ENCODE measurements at regions of chr7 and their contacts with region 1.

Region 1: GRCh38 chr7:111098011-111098925 is 7.3 kb downstream of the LRRN3 start:
- DNase-seq: peak; percentile 90
- H3K4me3 Mint-ChIP-seq: peak overlapping the region; percentile 79
- H3K27ac Mint-ChIP-seq: peak overlapping the region; percentile 62
- H3K4me1 Mint-ChIP-seq: peaks cover 58% of the 10 kb centered on the region
- H3K27me3 Mint-ChIP-seq: no peaks in the 10 kb centered on the region

Region 2: GRCh38 chr7:110595690-110596325 is 502.5 kb before region 1 on chr7:
- intact Hi-C with region 1: loop called (anchors 1 kb)
- DNase-seq: peak; percentile 62
- H3K4me3 Mint-ChIP-seq: no peak overlapping the region
- H3K27ac Mint-ChIP-seq: no peak overlapping the region
- H3K4me1 Mint-ChIP-seq: peaks cover 9% of the 10 kb centered on the region
- H3K27me3 Mint-ChIP-seq: peaks cover 3% of the 10 kb centered on the region

Region 3: GRCh38 chr7:111083413-111083812 is 14.9 kb before region 1 on chr7:
- intact Hi-C with region 1: loop called (anchors 2 kb)
- DNase-seq: peak; percentile 93
- H3K4me3 Mint-ChIP-seq: peak overlapping the region; percentile 58
- H3K27ac Mint-ChIP-seq: peak overlapping the region; percentile 86
- H3K4me1 Mint-ChIP-seq: peaks cover 70% of the 10 kb centered on the region
- H3K27me3 Mint-ChIP-seq: peaks cover 2% of the 10 kb centered on the region

Region 4: DNA sequence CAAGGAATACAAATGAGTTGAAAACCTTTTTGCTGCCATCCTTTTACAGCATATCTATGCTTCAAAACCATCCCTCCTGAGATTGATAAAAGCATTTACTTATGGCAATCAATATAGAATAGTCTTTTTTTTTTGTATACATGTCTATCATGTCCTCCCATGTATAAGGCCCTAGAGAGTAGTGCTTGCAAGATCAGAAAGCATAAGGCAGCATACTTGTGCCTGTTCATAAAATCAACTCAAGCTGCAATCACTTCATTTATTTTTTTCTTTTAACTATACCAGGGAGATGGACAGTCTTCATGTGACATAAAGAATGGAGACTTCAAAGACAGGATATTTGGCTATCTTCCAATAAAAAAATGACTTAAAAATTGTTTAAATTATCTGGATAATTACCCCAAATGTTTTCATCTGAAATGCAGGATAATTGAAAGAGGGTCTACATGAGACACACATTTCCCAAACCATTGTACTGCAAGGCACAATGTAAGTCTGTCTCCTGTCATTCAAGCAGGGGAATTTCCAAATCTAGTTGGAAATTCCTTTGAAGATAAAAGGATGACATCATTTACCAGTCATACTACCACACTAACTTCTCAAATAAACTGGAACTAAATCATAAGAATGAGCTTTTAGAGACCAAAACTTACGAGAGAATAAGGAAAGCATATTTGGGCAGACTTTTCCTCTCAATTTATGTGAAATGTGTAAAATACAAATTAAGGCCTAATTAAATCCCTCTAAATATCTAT is 15.2 kb after region 1 on chr7:
- intact Hi-C with region 1: loop called (anchors 1 kb)
- DNase-seq: no peak
- H3K4me3 Mint-ChIP-seq: peak overlapping the region; percentile 37
- H3K27ac Mint-ChIP-seq: peak overlapping the region; percentile 70
- H3K4me1 Mint-ChIP-seq: peaks cover 49% of the 10 kb centered on the region
- H3K27me3 Mint-ChIP-seq: no peaks in the 10 kb centered on the region